Mammary epithelial cell (primary cell): ENCODE measurements at regions of chr2 and their contacts with region 1.

Region 1: GRCh38 chr2:101597351-101597944 is 100.1 kb upstream of the MAP4K4 start:
- DNase-seq: no peak
- H3K4me3 ChIP-seq: no peak overlapping the region
- H3K27ac ChIP-seq: no peak overlapping the region
- H3K4me1 ChIP-seq: no peaks in the 10 kb centered on the region
- H3K27me3 ChIP-seq: no peaks in the 10 kb centered on the region
- CTCF ChIP-seq: no peak

Region 2: GRCh38 chr2:101538076-101538475 is 59.4 kb before region 1 on chr2:
- CTCF ChIA-PET with region 1: no interaction called
- dilution Hi-C with region 1: loop called (anchors 5 kb)
- in situ Hi-C with region 1: no loop called
- intact Hi-C with region 1: no loop called
- DNase-seq: no peak
- H3K4me3 ChIP-seq: no peak overlapping the region
- H3K27ac ChIP-seq: no peak overlapping the region
- H3K4me1 ChIP-seq: no peaks in the 10 kb centered on the region
- H3K27me3 ChIP-seq: no peaks in the 10 kb centered on the region
- CTCF ChIP-seq: no peak